B cell (primary cell): ENCODE measurements at regions of chr18 and their contacts with region 1.

Region 1: GRCh38 chr18:21612125-21612991 is at the start of gene SNRPD1:
- DNase-seq: peak; percentile 92
- ATAC-seq: peak; percentile 99
- H3K4me3 ChIP-seq: peak within 1 kb of the TSS; percentile 68 to 94 (median 85)
- H3K4me3 Mint-ChIP-seq: peak within 1 kb of the TSS; percentile 99
- H3K27ac ChIP-seq: peak within 1 kb of the TSS; percentile 87 to 89
- H3K27ac Mint-ChIP-seq: peak within 1 kb of the TSS; percentile 98
- H3K4me1 ChIP-seq: peaks cover 13 to 22% of the 10 kb centered on the region in 2 donors
- H3K4me1 Mint-ChIP-seq: peaks cover 33% of the 10 kb centered on the region
- H3K27me3 ChIP-seq: no peaks in the 10 kb centered on the region
- H3K27me3 Mint-ChIP-seq: no peaks in the 10 kb centered on the region
- CTCF ChIP-seq: peak; percentile 90
- total RNA-seq, gene SNRPD1: 22.1 and 23.9 TPM in 2 replicates

Region 2: DNA sequence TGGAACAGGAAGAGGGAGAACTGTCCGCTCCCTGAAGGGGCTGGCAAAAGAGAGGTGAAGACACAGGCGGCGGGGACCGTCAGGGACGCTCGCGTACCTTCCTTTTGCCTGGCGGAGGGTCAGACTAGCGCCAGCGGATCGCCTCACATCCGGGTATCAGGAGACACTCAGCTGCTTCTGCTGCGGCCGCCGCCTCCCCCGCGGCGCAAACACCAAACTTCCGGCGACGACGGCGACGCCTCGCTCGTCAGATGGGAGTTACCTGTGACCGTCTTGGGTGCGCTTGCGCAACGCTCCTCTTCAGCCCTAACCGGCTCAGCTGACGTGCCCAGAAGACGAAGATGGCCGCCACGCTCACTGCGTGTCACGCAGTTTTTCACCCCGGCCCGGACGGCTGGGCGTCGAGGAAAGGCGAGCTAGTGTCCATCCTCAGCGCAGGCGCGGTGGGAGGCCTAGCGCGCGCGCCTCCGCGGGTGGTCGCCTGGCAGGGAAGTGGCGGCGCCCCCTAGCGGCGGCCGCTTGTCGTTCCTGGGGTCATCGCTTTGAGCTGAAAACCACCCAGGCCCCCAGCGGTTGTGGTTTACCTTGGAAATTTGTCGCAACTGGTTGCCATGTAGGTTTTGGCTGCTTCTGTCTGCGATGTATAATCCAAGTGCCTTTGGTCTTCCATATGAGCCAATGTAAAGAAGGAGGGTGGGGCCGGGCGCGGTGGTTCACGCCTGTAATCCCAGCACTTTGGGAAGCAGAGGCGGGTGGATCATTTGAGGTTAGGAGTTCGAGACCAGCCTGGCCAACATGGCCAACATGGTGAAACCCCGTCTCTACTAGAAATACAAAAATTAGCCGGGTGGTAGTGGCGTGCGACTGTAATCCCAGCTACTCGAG is 11.6 kb before region 1 on chr18 and contains the start of gene ESCO1:
- CTCF ChIA-PET with region 1: interaction called, 108 read pairs
- POLR2A ChIA-PET with region 1: interaction called, 48 read pairs
- intact Hi-C with region 1: loop called (anchors 1 kb)
- DNase-seq: peak; percentile 99
- ATAC-seq: peak; percentile 79
- H3K4me3 ChIP-seq: peak within 1 kb of the TSS; percentile 66 to 99 (median 92)
- H3K4me3 Mint-ChIP-seq: peak within 1 kb of the TSS; percentile 99
- H3K27ac ChIP-seq: peak within 1 kb of the TSS; percentile 99
- H3K27ac Mint-ChIP-seq: peak within 1 kb of the TSS; percentile 100
- H3K4me1 ChIP-seq: peaks cover 37 to 39% of the 10 kb centered on the region in 2 donors
- H3K4me1 Mint-ChIP-seq: peaks cover 47% of the 10 kb centered on the region
- H3K27me3 ChIP-seq: no peaks in the 10 kb centered on the region
- H3K27me3 Mint-ChIP-seq: no peaks in the 10 kb centered on the region
- CTCF ChIP-seq: peak; percentile 99
- total RNA-seq, gene ESCO1: 30.0 and 31.2 TPM in 2 replicates

Region 3: GRCh38 chr18:21636769-21637168 is 24.4 kb after region 1 on chr18:
- CTCF ChIA-PET with region 1: no interaction called
- POLR2A ChIA-PET with region 1: no interaction called
- intact Hi-C with region 1: no loop called
- DNase-seq: no peak
- ATAC-seq: no peak
- H3K4me3 ChIP-seq: no peak overlapping the region
- H3K4me3 Mint-ChIP-seq: no peak overlapping the region
- H3K27ac ChIP-seq: no peak overlapping the region
- H3K27ac Mint-ChIP-seq: no peak overlapping the region
- H3K4me1 ChIP-seq: peaks cover 0 to 7% of the 10 kb centered on the region in 2 donors
- H3K4me1 Mint-ChIP-seq: peaks cover 13% of the 10 kb centered on the region
- H3K27me3 ChIP-seq: no peaks in the 10 kb centered on the region
- H3K27me3 Mint-ChIP-seq: no peaks in the 10 kb centered on the region
- CTCF ChIP-seq: no peak

Region 4: DNA sequence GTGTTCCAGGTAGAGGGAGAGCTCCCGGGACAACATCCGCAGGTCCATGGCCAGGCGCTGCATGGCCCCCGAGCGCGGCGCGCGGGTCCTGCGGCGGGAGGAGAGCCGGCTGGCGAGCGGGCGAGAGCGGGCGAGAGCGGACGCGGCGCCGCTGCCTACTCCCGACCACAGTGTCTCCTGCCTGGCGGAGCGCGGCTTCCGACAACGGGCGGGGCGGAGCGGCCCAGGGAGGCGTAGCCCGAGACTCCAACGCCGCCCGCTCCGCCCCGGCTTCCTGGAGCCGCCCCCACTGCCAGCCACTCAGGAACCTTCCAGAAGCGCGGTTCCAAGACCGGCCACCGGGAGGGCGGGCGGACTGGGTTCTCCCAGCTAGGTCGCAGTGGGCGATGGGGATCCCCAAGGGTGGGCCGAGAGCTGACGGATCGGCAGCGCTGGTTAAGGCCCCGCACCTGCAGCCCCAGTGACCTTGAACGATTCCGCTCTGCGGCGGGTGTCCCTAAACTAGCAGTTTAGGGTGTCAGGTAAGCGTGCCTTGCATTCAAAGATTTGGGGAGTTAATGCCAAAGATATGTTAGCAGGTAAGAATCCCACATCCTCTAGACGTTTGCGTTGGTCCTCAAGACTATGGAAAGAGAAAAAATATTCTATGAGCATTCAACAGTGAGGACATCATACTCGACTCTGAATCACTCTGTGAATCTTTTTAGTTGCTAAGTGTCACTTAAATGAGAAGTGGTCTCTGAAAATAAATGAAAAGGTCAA is 92.4 kb after region 1 on chr18 and contains the start of gene ABHD3:
- CTCF ChIA-PET with region 1: interaction called, 4 read pairs
- POLR2A ChIA-PET with region 1: interaction called, 4 read pairs
- intact Hi-C with region 1: loop called (anchors 1 kb)
- DNase-seq: peak; percentile 93
- ATAC-seq: peak; percentile 93
- H3K4me3 ChIP-seq: peak within 1 kb of the TSS; percentile 66 to 87 (median 69)
- H3K4me3 Mint-ChIP-seq: peak within 1 kb of the TSS; percentile 98
- H3K27ac ChIP-seq: peak within 1 kb of the TSS; percentile 82 to 92
- H3K27ac Mint-ChIP-seq: peak within 1 kb of the TSS; percentile 95
- H3K4me1 ChIP-seq: peaks cover 10 to 11% of the 10 kb centered on the region in 2 donors
- H3K4me1 Mint-ChIP-seq: peaks cover 20% of the 10 kb centered on the region
- H3K27me3 ChIP-seq: no peaks in the 10 kb centered on the region
- H3K27me3 Mint-ChIP-seq: no peaks in the 10 kb centered on the region
- CTCF ChIP-seq: peak; percentile 58
- total RNA-seq, gene ABHD3: 27.6 and 32.8 TPM in 2 replicates

Region 5: GRCh38 chr18:21740724-21741510 is 128.6 kb after region 1 on chr18 and contains the start of gene MIB1:
- CTCF ChIA-PET with region 1: interaction called, 4 read pairs
- POLR2A ChIA-PET with region 1: interaction called, 5 read pairs
- intact Hi-C with region 1: loop called (anchors 1 kb)
- DNase-seq: peak; percentile 98
- ATAC-seq: peak; percentile 64
- H3K4me3 ChIP-seq: peak within 1 kb of the TSS; percentile 51 to 98 (median 94)
- H3K4me3 Mint-ChIP-seq: peak within 1 kb of the TSS; percentile 95
- H3K27ac ChIP-seq: peak within 1 kb of the TSS; percentile 86
- H3K27ac Mint-ChIP-seq: peak within 1 kb of the TSS; percentile 97
- H3K4me1 ChIP-seq: peaks cover 9 to 13% of the 10 kb centered on the region in 2 donors
- H3K4me1 Mint-ChIP-seq: peaks cover 30% of the 10 kb centered on the region
- H3K27me3 ChIP-seq: no peaks in the 10 kb centered on the region
- H3K27me3 Mint-ChIP-seq: no peaks in the 10 kb centered on the region
- CTCF ChIP-seq: no peak
- total RNA-seq, gene MIB1: 24.4 and 25.5 TPM in 2 replicates

Region 6: GRCh38 chr18:21851327-21851972 is 239.1 kb after region 1 on chr18:
- CTCF ChIA-PET with region 1: interaction called, 3 read pairs
- POLR2A ChIA-PET with region 1: no interaction called
- intact Hi-C with region 1: loop called (anchors 5 kb)
- DNase-seq: peak; percentile 16
- ATAC-seq: no peak
- H3K4me3 ChIP-seq: no peak overlapping the region
- H3K4me3 Mint-ChIP-seq: no peak overlapping the region
- H3K27ac ChIP-seq: no peak overlapping the region
- H3K27ac Mint-ChIP-seq: no peak overlapping the region
- H3K4me1 ChIP-seq: peaks cover 11 to 15% of the 10 kb centered on the region in 2 donors
- H3K4me1 Mint-ChIP-seq: peaks cover 17% of the 10 kb centered on the region
- H3K27me3 ChIP-seq: no peaks in the 10 kb centered on the region
- H3K27me3 Mint-ChIP-seq: no peaks in the 10 kb centered on the region
- CTCF ChIP-seq: peak; percentile 44